CD4-positive, alpha-beta memory T cell (primary cell): ENCODE measurements at regions of chr14 and their contacts with region 1.

Region 1: GRCh38 chr14:73058224-73058921 is at the start of gene RBM25:
- DNase-seq: peak; percentile 94 to 98 (median 96)
- H3K4me3 ChIP-seq: peak within 1 kb of the TSS; percentile 71 to 77
- H3K4me3 Mint-ChIP-seq: peak within 1 kb of the TSS in 1 of 8 donors; percentile 28
- H3K27ac ChIP-seq: peak within 1 kb of the TSS; percentile 90
- H3K27ac Mint-ChIP-seq: no peak within 1 kb of the TSS
- H3K4me1 ChIP-seq: peaks cover 48% of the 10 kb centered on the region
- H3K4me1 Mint-ChIP-seq: peaks cover 22 to 47% (median 28%) of the 10 kb centered on the region in 4 donors
- H3K27me3 ChIP-seq: no peaks in the 10 kb centered on the region
- H3K27me3 Mint-ChIP-seq: no peaks in the 10 kb centered on the region
- total RNA-seq, gene RBM25: 143 to 149 TPM

Region 2: DNA sequence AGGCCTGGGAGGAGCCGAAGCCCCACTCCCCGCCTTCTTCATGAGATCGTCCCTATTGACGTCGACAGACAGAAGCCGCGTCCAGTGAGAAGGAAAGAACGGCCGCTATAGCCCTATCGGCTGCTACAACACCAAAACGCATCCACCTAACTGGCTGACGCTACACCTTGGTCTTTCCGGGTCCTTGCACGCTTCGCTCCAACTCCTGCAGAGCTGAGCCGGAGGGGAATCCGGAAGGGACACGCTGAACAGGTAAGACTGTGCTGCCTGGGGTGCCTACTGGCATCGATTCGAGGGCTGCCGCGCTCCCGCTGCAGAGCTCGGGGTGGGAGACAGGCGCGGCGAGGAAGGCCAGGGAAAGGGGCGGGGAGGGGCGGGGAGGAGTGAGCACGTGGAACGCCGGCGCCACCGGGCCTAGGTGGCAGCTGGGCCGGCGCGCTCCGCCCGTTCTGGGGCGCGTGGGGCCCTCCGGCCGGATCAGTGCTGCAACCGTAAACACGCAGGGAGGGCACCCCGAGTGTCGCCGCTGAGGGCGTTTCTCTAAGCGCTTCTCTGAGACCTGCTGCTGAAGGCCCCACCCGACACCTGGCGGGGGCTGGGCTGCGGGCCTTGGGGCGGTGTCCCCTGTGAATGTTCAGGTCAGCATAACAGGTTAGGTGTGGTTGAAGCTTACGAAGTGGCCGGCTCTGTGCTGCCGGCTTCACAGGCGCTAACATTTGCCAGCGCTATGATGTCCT is 131.9 kb before region 1 on chr14 and contains the start of gene DCAF4:
- CTCF ChIA-PET with region 1: no interaction called
- POLR2A ChIA-PET with region 1: no interaction called
- intact Hi-C with region 1: loop called (anchors 1 kb)
- DNase-seq: peak; percentile 90 to 98 (median 93)
- H3K4me3 ChIP-seq: peak within 1 kb of the TSS; percentile 73 to 82
- H3K4me3 Mint-ChIP-seq: peak within 1 kb of the TSS; percentile 91 to 99 (median 93)
- H3K27ac ChIP-seq: peak within 1 kb of the TSS; percentile 66
- H3K27ac Mint-ChIP-seq: peak within 1 kb of the TSS; percentile 93 to 97 (median 95)
- H3K4me1 ChIP-seq: peaks cover 12% of the 10 kb centered on the region
- H3K4me1 Mint-ChIP-seq: peaks cover 7 to 20% (median 13%) of the 10 kb centered on the region in 4 donors
- H3K27me3 ChIP-seq: no peaks in the 10 kb centered on the region
- H3K27me3 Mint-ChIP-seq: peaks cover 0 to 2% of the 10 kb centered on the region in 2 donors
- total RNA-seq, gene DCAF4: 25.2 to 26.9 TPM

Region 3: DNA sequence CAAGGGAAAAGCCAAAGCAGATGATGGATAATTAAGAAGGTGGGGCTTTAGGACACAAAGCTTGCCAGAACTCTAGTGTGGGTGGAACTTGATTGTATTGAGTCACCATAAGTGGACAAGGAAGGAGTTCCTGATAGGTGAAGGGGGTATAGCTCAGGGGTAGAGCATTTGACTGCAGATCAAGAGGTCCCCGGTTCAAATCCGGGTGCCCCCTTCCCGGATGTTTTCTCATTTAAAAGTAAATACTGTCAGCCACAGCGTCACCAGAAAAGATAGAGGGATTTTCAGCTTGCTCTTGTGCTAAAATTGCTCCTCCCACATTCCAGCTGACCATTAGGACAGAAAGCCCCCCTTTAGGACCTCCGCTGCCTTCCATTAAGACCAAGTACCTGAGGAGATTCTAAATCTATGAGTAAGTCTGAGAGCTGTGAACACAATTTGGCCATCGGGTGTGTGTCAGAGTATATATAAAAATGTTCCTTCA is 95.5 kb before region 1 on chr14:
- CTCF ChIA-PET with region 1: no interaction called
- POLR2A ChIA-PET with region 1: no interaction called
- intact Hi-C with region 1: no loop called
- DNase-seq: no peak
- H3K4me3 ChIP-seq: no peak overlapping the region
- H3K4me3 Mint-ChIP-seq: no peak overlapping the region
- H3K27ac ChIP-seq: no peak overlapping the region
- H3K27ac Mint-ChIP-seq: peak overlapping the region in 1 of 7 donors; percentile 61
- H3K4me1 ChIP-seq: peaks cover 7% of the 10 kb centered on the region
- H3K4me1 Mint-ChIP-seq: peaks cover 0 to 3% (median under 1%) of the 10 kb centered on the region in 4 donors
- H3K27me3 ChIP-seq: no peaks in the 10 kb centered on the region
- H3K27me3 Mint-ChIP-seq: no peaks in the 10 kb centered on the region

Region 4: GRCh38 chr14:73026845-73027542 is 31.4 kb before region 1 on chr14 and contains the start of gene ZFYVE1:
- CTCF ChIA-PET with region 1: interaction called, 10 read pairs
- POLR2A ChIA-PET with region 1: interaction called, 88 read pairs
- intact Hi-C with region 1: loop called (anchors 1 kb)
- DNase-seq: peak; percentile 86 to 94 (median 89)
- H3K4me3 ChIP-seq: peak within 1 kb of the TSS; percentile 47 to 88
- H3K4me3 Mint-ChIP-seq: peak within 1 kb of the TSS; percentile 97 to 99 (median 98)
- H3K27ac ChIP-seq: peak within 1 kb of the TSS; percentile 69
- H3K27ac Mint-ChIP-seq: peak within 1 kb of the TSS; percentile 69 to 98 (median 95)
- H3K4me1 ChIP-seq: peaks cover 27% of the 10 kb centered on the region
- H3K4me1 Mint-ChIP-seq: peaks cover 30 to 47% (median 38%) of the 10 kb centered on the region in 4 donors
- H3K27me3 ChIP-seq: no peaks in the 10 kb centered on the region
- H3K27me3 Mint-ChIP-seq: no peaks in the 10 kb centered on the region
- total RNA-seq, gene ZFYVE1: 18.7 to 21.5 TPM

Region 5: GRCh38 chr14:73069585-73069984 is 11.2 kb after region 1 on chr14:
- CTCF ChIA-PET with region 1: no interaction called
- POLR2A ChIA-PET with region 1: interaction called, 11 read pairs
- intact Hi-C with region 1: no loop called
- DNase-seq: no peak
- H3K4me3 ChIP-seq: no peak overlapping the region
- H3K4me3 Mint-ChIP-seq: peak overlapping the region in 1 of 8 donors; percentile 44
- H3K27ac ChIP-seq: no peak overlapping the region
- H3K27ac Mint-ChIP-seq: peak overlapping the region in 2 of 7 donors; percentile 46 to 57
- H3K4me1 ChIP-seq: peaks cover 39% of the 10 kb centered on the region
- H3K4me1 Mint-ChIP-seq: peaks cover 14 to 71% (median 38%) of the 10 kb centered on the region in 4 donors
- H3K27me3 ChIP-seq: no peaks in the 10 kb centered on the region
- H3K27me3 Mint-ChIP-seq: no peaks in the 10 kb centered on the region

Region 6: DNA sequence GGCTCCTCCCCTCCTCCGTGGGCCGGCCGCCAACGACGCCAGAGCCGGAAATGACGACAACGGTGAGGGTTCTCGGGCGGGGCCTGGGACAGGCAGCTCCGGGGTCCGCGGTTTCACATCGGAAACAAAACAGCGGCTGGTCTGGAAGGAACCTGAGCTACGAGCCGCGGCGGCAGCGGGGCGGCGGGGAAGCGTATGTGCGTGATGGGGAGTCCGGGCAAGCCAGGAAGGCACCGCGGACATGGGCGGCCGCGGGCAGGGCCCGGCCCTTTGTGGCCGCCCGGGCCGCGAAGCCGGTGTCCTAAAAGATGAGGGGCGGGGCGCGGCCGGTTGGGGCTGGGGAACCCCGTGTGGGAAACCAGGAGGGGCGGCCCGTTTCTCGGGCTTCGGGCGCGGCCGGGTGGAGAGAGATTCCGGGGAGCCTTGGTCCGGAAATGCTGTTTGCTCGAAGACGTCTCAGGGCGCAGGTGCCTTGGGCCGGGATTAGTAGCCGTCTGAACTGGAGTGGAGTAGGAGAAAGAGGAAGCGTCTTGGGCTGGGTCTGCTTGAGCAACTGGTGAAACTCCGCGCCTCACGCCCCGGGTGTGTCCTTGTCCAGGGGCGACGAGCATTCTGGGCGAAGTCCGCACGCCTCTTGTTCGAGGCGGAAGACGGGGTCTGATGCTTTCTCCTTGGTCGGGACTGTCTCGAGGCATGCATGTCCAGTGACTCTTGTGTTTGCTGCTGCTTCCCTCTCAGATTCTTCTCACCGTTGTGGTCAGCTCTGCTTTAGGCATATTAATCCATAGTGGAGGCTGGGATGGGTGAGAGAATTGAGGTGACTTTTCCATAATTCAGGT is 78.2 kb after region 1 on chr14 and contains the start of gene PSEN1:
- CTCF ChIA-PET with region 1: interaction called, 5 read pairs
- POLR2A ChIA-PET with region 1: interaction called, 46 read pairs
- intact Hi-C with region 1: loop called (anchors 1 kb)
- DNase-seq: peak; percentile 97 to 100 (median 98)
- H3K4me3 ChIP-seq: peak within 1 kb of the TSS; percentile 58 to 96
- H3K4me3 Mint-ChIP-seq: peak within 1 kb of the TSS; percentile 89 to 98 (median 96)
- H3K27ac ChIP-seq: peak within 1 kb of the TSS; percentile 90
- H3K27ac Mint-ChIP-seq: peak within 1 kb of the TSS; percentile 93 to 100 (median 99)
- H3K4me1 ChIP-seq: peaks cover 24% of the 10 kb centered on the region
- H3K4me1 Mint-ChIP-seq: peaks cover 24 to 44% (median 28%) of the 10 kb centered on the region in 4 donors
- H3K27me3 ChIP-seq: no peaks in the 10 kb centered on the region
- H3K27me3 Mint-ChIP-seq: no peaks in the 10 kb centered on the region
- total RNA-seq, gene PSEN1: 47.4 to 51.7 TPM

Region 7: GRCh38 chr14:73458151-73458976 is 400.0 kb after region 1 on chr14 and contains the start of gene NUMB:
- CTCF ChIA-PET with region 1: no interaction called
- POLR2A ChIA-PET with region 1: interaction called, 8 read pairs
- intact Hi-C with region 1: loop called (anchors 10 kb)
- DNase-seq: peak; percentile 97 to 99 (median 98)
- H3K4me3 ChIP-seq: peak within 1 kb of the TSS; percentile 58 to 75
- H3K4me3 Mint-ChIP-seq: peak within 1 kb of the TSS; percentile 95 to 100 (median 98)
- H3K27ac ChIP-seq: peak within 1 kb of the TSS; percentile 86
- H3K27ac Mint-ChIP-seq: peak within 1 kb of the TSS; percentile 77 to 99 (median 97)
- H3K4me1 ChIP-seq: peaks cover 41% of the 10 kb centered on the region
- H3K4me1 Mint-ChIP-seq: peaks cover 25 to 46% (median 34%) of the 10 kb centered on the region in 4 donors
- H3K27me3 ChIP-seq: no peaks in the 10 kb centered on the region
- H3K27me3 Mint-ChIP-seq: no peaks in the 10 kb centered on the region
- total RNA-seq, gene NUMB: 45.3 to 47.3 TPM

Region 8: DNA sequence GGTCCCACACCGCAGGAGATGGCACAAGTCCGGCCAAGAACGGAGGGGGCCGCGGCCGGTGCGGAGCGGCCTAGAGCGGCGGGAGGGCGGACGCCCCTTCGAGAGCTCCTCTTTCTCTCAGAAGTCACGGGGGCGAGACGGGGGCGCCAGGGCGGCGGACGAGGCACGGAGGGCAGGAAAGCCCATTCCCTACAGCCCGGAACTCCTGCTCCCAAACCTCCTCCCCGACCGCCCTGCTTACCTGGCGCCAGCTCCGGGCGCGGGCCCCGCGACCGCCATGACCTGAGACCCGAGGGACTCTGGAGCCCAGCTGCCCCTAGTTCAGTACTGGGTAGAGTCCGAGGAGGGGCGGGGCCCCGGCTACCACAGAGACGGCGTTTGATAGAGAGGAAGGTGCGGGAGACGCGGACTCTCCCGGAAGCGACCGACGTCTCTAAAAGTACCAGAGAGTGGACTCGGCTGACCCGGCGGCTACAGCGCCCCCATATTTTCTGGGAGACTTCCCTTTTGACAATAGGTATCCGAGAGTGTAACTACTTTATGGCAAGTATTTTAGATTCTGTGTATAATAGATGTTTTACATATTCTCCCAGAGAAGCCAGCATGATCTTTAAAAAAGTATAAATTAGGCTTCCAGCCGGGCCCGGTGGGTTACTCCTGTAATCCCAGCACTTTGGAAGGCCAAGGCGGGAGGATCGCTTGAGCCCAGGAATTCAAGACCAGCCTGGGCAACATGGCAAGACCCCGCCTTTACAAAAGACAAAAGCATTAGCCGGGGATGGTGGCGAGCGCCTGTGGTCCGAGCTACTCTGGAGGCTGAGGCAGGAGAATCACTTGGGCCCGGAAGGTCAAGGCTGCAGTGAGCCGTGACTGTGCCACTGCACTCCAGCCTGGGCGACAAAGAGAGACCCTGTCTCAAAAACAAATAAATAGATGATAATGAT is 1244.5 kb after region 1 on chr14 and contains the start of gene ABCD4:
- CTCF ChIA-PET with region 1: no interaction called
- POLR2A ChIA-PET with region 1: no interaction called
- intact Hi-C with region 1: loop called (anchors 5 kb)
- DNase-seq: peak; percentile 73 to 85 (median 76)
- H3K4me3 ChIP-seq: peak within 1 kb of the TSS; percentile 58 to 94
- H3K4me3 Mint-ChIP-seq: peak within 1 kb of the TSS; percentile 87 to 99 (median 98)
- H3K27ac ChIP-seq: peak within 1 kb of the TSS; percentile 65
- H3K27ac Mint-ChIP-seq: peak within 1 kb of the TSS; percentile 82 to 98 (median 94)
- H3K4me1 ChIP-seq: peaks cover 29% of the 10 kb centered on the region
- H3K4me1 Mint-ChIP-seq: peaks cover 26 to 51% (median 32%) of the 10 kb centered on the region in 4 donors
- H3K27me3 ChIP-seq: no peaks in the 10 kb centered on the region
- H3K27me3 Mint-ChIP-seq: no peaks in the 10 kb centered on the region
- total RNA-seq, gene ABCD4: 98.3 to 102 TPM